Dendritic cell treated with granulocyte-macrophage colony-stimulating factor and Interleukin-4, amounts not matched to agents 40 ng/mL and 50 ng/mL, for 4 days (primary cell): ENCODE measurements at regions of chr11 and their contacts with region 1.

Region 1: DNA sequence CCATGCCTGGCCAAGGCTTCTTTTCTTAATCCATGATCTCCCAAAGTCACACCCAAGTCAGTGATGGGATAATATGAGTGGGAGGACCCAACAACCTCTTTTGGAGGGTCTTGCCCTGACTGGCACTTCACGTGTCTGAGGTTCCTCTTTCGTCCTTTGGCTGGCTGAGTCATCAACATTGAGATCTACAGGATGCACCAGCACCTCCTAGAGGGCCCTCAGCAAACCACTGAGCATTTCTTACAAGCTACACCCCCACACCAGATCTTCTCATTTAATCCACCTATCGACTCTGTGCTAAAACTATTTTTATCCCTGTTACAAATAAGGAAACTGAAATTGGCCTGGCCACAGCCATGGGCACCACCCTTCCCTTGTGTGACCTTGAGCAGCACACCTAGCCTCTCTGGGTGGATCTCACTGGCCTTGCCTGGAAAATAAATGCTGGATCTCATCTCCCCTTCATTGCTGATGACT is 63.4 kb downstream of the FLI1 start:
- H3K4me3 Mint-ChIP-seq: no peak overlapping the region
- H3K27ac Mint-ChIP-seq: peak overlapping the region; percentile 85
- H3K4me1 Mint-ChIP-seq: peaks cover 48% of the 10 kb centered on the region
- H3K27me3 Mint-ChIP-seq: no peaks in the 10 kb centered on the region

Region 2: GRCh38 chr11:128603752-128604414 is 153.4 kb before region 1 on chr11:
- intact Hi-C with region 1: no loop called
- H3K4me3 Mint-ChIP-seq: no peak overlapping the region
- H3K27ac Mint-ChIP-seq: no peak overlapping the region
- H3K4me1 Mint-ChIP-seq: no peaks in the 10 kb centered on the region
- H3K27me3 Mint-ChIP-seq: no peaks in the 10 kb centered on the region

Region 3: GRCh38 chr11:128630367-128631230 is 126.7 kb before region 1 on chr11:
- intact Hi-C with region 1: loop called (anchors 2 kb)
- H3K4me3 Mint-ChIP-seq: no peak overlapping the region
- H3K27ac Mint-ChIP-seq: no peak overlapping the region
- H3K4me1 Mint-ChIP-seq: peaks cover 1% of the 10 kb centered on the region
- H3K27me3 Mint-ChIP-seq: peaks cover 3% of the 10 kb centered on the region

Region 4: GRCh38 chr11:128653801-128654231 is 103.5 kb before region 1 on chr11:
- intact Hi-C with region 1: loop called (anchors 5 kb)
- H3K4me3 Mint-ChIP-seq: peak overlapping the region; percentile 66
- H3K27ac Mint-ChIP-seq: peak overlapping the region; percentile 86
- H3K4me1 Mint-ChIP-seq: peaks cover 22% of the 10 kb centered on the region
- H3K27me3 Mint-ChIP-seq: no peaks in the 10 kb centered on the region

Region 5: DNA sequence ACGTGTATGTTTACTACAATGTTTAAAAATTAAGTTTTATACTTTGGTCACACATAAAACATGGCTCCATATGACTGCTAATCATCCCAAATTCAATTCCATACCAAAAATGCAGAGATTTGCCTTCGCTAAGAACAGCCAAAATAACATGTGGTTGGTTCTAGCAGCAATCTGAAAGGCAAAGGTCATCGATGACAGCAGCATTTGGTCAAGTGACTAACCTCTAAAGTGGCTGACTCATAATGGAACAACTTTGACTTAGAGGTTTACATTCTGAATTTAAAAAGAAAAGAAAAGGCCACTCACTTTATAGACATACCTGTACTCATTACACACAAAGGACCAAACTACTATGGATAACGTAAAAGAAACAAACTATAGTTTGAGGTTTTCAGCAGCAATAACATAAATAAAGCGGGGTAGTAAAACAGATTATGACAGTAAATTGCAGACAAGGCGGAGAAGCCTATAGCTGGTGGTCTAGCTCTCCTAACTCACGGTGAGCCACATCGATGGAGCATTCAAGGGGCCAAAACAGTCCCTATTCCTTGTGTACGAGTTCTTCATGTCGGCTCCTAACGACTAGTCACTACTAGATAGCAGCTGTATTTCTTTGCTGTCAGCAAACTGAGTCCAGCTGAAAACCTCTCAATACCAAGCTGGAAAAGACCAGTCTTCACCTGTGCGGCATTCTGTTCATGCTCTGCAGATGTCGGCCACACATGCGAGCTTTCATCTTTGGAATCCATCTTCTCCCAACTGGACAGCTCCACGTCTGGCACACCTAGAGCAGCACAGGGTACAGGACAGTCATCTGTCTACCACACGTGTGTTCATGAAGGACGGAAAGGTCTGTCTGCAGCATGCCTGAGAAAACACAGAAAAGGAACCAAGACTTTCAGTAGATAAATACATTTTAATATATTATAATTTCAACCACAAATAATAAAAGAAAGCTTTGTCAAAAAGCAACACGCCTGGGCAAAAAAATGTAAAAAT is 1203.2 kb after region 1 on chr11:
- intact Hi-C with region 1: no loop called
- H3K4me3 Mint-ChIP-seq: no peak overlapping the region
- H3K27ac Mint-ChIP-seq: no peak overlapping the region
- H3K4me1 Mint-ChIP-seq: peaks cover 24% of the 10 kb centered on the region
- H3K27me3 Mint-ChIP-seq: no peaks in the 10 kb centered on the region